GM10248 (cell line): ENCODE measurements at regions of chr7 and their contacts with region 1.

Region 1: GRCh38 chr7:132906193-132906835 is 175.6 kb downstream of the CHCHD3 start:
- DNase-seq: peak; percentile 20
- CTCF ChIP-seq: no peak

Region 2: GRCh38 chr7:132895231-132895630 is 11.1 kb before region 1 on chr7:
- CTCF ChIA-PET with region 1: interaction called, 14 read pairs
- POLR2A ChIA-PET with region 1: no interaction called
- DNase-seq: no peak
- CTCF ChIP-seq: no peak